Lower lobe of right lung (tissue), 2 donors: ENCODE measurements at regions of chr17 and their contacts with region 1.

Region 1: DNA sequence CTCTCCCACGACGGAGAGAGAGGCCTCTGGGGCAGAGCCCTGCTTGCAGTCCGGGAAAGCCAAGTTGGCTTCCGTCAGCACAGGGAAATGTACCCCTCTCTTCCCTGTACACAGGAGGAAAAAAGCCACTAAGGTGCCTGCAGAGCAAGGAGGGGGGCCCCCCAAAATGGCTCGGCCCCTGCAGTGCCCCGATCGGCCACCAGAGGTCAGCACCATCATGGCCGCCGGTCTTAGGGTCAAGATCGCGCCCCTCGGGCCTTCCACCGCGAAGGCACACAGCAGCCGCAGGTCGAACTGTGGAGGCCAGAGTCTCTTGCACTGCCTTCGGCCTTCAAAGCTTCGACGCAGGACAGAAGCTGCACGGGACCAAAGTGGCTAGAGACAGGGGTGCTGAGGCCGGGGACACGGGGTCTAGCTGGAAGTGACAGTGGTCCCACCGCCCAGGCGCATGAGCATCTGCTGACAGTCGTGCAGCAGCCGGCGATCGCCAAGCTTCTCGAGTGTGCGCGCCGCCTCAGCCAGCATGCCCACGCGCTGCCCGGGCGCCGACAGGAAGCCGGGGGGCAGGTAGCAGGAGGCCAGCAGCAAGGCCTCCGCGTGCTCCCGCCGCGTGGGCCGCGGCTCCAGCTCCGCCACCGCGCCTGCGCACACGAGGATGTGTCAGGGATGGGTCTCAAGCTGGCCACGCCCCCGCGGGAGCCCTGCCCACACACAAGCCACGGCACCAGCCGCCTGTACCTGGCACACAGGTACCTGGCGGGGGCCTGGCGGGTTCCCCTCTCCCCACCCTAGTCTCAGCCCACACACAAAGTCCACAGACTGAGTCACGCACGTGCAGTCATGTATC is 24.4 kb downstream of the SREBF1 start:
- DNase-seq: peak; percentile 85
- ATAC-seq: peak; percentile 75 to 84
- H3K4me3 ChIP-seq: no peak overlapping the region
- H3K27ac ChIP-seq: peak overlapping the region; percentile 49
- H3K4me1 ChIP-seq: peaks cover 26% of the 10 kb centered on the region
- H3K27me3 ChIP-seq: no peaks in the 10 kb centered on the region
- CTCF ChIP-seq: peak; percentile 100

Region 2: GRCh38 chr17:17641621-17642409 is 170.6 kb before region 1 on chr17:
- intact Hi-C with region 1: no loop called
- DNase-seq: peak; percentile 76
- ATAC-seq: peak; percentile 92 to 94
- H3K4me3 ChIP-seq: no peak overlapping the region
- H3K27ac ChIP-seq: no peak overlapping the region
- H3K4me1 ChIP-seq: peaks cover 3% of the 10 kb centered on the region
- H3K27me3 ChIP-seq: no peaks in the 10 kb centered on the region
- CTCF ChIP-seq: peak; percentile 93

Region 3: GRCh38 chr17:17774009-17774881 is 38.2 kb before region 1 on chr17:
- intact Hi-C with region 1: no loop called
- DNase-seq: no peak
- ATAC-seq: peak; percentile 48 to 80
- H3K4me3 ChIP-seq: no peak overlapping the region
- H3K27ac ChIP-seq: peak overlapping the region; percentile 72
- H3K4me1 ChIP-seq: peaks cover 29% of the 10 kb centered on the region
- H3K27me3 ChIP-seq: no peaks in the 10 kb centered on the region
- CTCF ChIP-seq: peak; percentile 28

Region 4: GRCh38 chr17:17859909-17860765 is 47.7 kb after region 1 on chr17:
- intact Hi-C with region 1: loop called (anchors 5 kb)
- DNase-seq: peak; percentile 78
- ATAC-seq: peak; percentile 94 to 96
- H3K4me3 ChIP-seq: no peak overlapping the region
- H3K27ac ChIP-seq: peak overlapping the region; percentile 38
- H3K4me1 ChIP-seq: peaks cover 27% of the 10 kb centered on the region
- H3K27me3 ChIP-seq: no peaks in the 10 kb centered on the region
- CTCF ChIP-seq: peak; percentile 99